ENCODE measurements at regions of chr10 and their contacts with region 1.

Region 1: GRCh38 chr10:4131407-4132228 is 346.6 kb upstream of the KLF6 start:
- DNase-seq: peak; percentile 49
- H3K4me3 Mint-ChIP-seq: no peak overlapping the region
- H3K27ac Mint-ChIP-seq: no peak overlapping the region
- H3K4me1 Mint-ChIP-seq: peaks cover 26% of the 10 kb centered on the region
- H3K27me3 Mint-ChIP-seq: no peaks in the 10 kb centered on the region

Region 2: GRCh38 chr10:3226960-3227744 is 904.5 kb before region 1 on chr10:
- intact Hi-C with region 1: loop called (anchors 5 kb)
- DNase-seq: no peak
- H3K4me3 Mint-ChIP-seq: no peak overlapping the region
- H3K27ac Mint-ChIP-seq: no peak overlapping the region
- H3K4me1 Mint-ChIP-seq: peaks cover 18% of the 10 kb centered on the region
- H3K27me3 Mint-ChIP-seq: peaks cover 18% of the 10 kb centered on the region

Region 3: DNA sequence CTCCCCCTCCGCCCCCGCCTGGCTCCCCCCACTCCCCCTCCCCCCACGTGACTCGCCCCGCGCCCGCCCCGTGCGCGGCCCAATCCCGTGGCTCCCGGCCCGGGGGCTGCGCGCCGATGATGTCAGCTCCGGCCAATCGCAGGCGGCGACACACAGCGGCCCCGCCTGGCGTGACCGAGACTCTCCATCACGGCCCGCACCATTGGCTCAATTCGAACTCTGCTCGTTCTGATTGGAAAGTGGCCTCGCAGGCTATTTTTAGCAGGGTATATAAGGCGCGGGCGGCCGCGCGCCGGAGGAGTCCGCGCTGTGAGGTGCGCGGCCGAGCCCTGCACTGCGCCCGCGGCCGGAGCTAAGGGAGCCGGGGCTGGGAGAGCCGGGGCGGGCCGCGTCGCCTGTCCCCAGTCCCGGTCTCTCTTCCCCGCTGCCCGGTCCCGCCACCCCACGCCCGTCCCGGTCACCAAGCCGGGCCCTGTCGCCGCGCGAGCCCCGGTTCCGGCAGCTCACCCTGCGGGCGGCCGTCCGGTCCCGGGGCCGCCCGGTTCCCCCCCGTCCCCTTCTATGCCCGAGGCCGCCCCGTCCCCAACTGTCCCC is 346.3 kb before region 1 on chr10:
- intact Hi-C with region 1: loop called (anchors 2 kb)
- DNase-seq: peak; percentile 99
- H3K4me3 Mint-ChIP-seq: peak overlapping the region; percentile 93
- H3K27ac Mint-ChIP-seq: peak overlapping the region; percentile 96
- H3K4me1 Mint-ChIP-seq: peaks cover 49% of the 10 kb centered on the region
- H3K27me3 Mint-ChIP-seq: no peaks in the 10 kb centered on the region

Region 4: GRCh38 chr10:3867454-3868270 is 264.0 kb before region 1 on chr10:
- intact Hi-C with region 1: loop called (anchors 2 kb)
- DNase-seq: no peak
- H3K4me3 Mint-ChIP-seq: no peak overlapping the region
- H3K27ac Mint-ChIP-seq: peak overlapping the region; percentile 77
- H3K4me1 Mint-ChIP-seq: peaks cover 72% of the 10 kb centered on the region
- H3K27me3 Mint-ChIP-seq: no peaks in the 10 kb centered on the region

Region 5: GRCh38 chr10:3972460-3973301 is 158.9 kb before region 1 on chr10:
- intact Hi-C with region 1: loop called (anchors 2 kb)
- DNase-seq: peak; percentile 42
- H3K4me3 Mint-ChIP-seq: peak overlapping the region; percentile 79
- H3K27ac Mint-ChIP-seq: peak overlapping the region; percentile 98
- H3K4me1 Mint-ChIP-seq: peaks cover 42% of the 10 kb centered on the region
- H3K27me3 Mint-ChIP-seq: no peaks in the 10 kb centered on the region

Region 6: GRCh38 chr10:4073912-4074311 is 57.7 kb before region 1 on chr10:
- intact Hi-C with region 1: loop called (anchors 2 kb)
- DNase-seq: no peak
- H3K4me3 Mint-ChIP-seq: no peak overlapping the region
- H3K27ac Mint-ChIP-seq: no peak overlapping the region
- H3K4me1 Mint-ChIP-seq: peaks cover 40% of the 10 kb centered on the region
- H3K27me3 Mint-ChIP-seq: no peaks in the 10 kb centered on the region

Region 7: DNA sequence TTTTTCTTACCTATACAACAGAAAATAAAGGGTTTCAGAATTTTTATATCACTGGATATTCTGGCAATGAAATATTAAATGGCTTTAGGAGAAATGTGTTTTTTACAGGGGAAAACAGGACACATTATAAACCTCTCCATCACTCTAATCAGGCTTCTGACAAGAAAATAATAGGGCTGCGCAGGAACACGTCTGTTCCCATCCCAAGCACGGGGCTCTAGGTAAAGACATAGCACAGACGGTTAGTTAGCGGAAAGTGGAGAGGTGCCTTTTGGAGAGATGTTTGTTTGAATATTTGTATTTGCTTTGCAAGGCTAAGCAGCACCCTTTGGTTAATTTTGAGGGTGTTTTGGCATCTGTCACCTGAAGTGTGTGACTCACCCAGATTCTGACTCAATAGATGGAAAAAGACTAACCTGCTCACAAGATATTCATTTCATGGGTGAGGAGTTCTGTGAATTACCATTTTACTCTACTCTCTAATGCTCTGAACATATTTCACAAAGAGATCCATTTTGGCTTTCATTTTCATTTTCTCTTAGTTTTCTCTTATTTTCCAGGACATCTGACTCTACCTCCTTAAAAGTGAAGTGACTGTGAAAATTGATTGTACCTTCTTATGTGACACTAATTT is 519.9 kb after region 1 on chr10:
- intact Hi-C with region 1: loop called (anchors 1 kb)
- DNase-seq: no peak
- H3K4me3 Mint-ChIP-seq: peak overlapping the region; percentile 8
- H3K27ac Mint-ChIP-seq: peak overlapping the region; percentile 85
- H3K4me1 Mint-ChIP-seq: peaks cover 32% of the 10 kb centered on the region
- H3K27me3 Mint-ChIP-seq: peaks cover 3% of the 10 kb centered on the region

Measured in activated T-helper 1 cell treated with anti-CD3 and anti-CD28 coated beads, Interleukin-12 subunit alpha, Interleukin-12 subunit beta, Interleukin-2, Interleukin-4 antibody, amounts not matched to agents 30 ng/mL and 10 ng/mL and 1 ng/mL, durations not matched to agents 14 hours and 24 hours and 36 hours (primary cell).